Aorta (tissue), 5 donors: ENCODE measurements at regions of chr20 and their contacts with region 1.

Region 1: DNA sequence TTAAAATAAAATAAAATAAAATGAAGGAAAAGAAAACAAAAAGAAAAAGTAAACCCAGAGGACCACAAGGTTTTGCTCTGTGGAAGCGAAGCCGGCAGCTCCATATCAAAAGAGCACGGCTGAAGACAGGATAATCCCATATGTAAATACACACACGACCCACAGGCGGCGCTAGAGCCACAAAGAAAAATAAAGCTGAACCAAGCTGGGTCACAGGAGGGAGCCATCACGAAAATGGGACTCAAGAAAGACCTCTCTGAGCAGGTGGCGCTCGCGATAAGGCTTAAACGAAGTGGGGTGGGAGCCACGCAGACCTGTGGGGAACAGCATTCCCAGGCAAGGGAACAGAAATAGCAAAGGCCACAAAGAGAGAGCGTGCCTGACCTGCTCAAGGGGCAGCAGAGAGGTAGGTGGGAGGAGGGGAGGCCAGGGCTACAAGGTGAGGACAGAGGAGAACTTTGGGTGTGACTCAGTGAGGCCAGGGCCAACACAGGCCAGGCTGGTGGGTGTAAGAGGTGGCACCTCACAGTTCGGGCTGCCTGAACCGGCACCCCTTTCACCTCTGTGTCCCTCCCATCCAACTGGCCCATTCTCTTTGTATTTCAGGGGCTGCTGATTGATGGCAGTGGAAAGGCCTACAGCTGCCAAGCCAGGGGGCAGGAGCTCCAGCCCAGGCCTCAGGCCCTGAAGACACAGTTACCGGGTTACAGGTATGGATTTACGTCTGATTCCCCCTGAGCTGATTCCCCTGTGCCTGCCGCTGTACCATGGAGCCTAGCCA is 26.0 kb downstream of the PTGIS start:
- DNase-seq: peak; percentile 74 to 90
- ATAC-seq: peak; percentile 86
- H3K4me3 ChIP-seq: no peak overlapping the region
- H3K27ac ChIP-seq: peak overlapping the region in 1 of 2 donors; percentile 0
- H3K4me1 ChIP-seq: no peaks in the 10 kb centered on the region
- H3K27me3 ChIP-seq: no peaks in the 10 kb centered on the region

Region 2: DNA sequence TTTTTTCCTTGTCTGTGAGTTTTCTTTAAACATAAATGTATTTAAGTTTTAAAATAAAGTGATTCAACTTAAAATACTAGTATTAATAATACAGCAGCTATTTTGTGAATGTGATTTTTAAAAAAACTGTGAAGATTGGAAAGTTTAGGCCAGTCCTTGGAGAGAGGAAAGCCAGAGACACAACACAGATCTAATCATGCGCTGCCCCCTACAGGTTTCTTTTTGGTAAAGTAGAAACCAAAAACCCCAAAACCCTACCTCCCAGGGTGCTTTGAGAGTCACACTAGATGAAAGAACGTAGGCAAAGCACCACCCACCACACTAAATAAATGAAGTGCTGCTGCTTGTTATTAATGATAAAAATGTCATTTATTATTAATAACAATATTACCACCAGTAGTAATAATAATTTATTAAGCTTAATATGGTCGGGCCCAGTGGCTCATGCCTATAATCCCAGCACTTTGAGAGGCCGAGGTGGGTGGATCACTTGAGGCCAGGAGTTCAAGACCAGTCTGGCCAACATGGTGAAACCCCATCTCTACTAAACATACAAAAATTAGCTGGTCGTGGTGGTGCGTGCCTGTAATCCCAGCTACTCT is 304.4 kb after region 1 on chr20:
- intact Hi-C with region 1: loop called in 1 of 2 experiments (anchors 5 kb)
- DNase-seq: no peak
- ATAC-seq: peak; percentile 70
- H3K4me3 ChIP-seq: no peak overlapping the region
- H3K27ac ChIP-seq: no peak overlapping the region
- H3K4me1 ChIP-seq: peaks cover 5 to 11% of the 10 kb centered on the region in 2 donors
- H3K27me3 ChIP-seq: no peaks in the 10 kb centered on the region

Region 3: DNA sequence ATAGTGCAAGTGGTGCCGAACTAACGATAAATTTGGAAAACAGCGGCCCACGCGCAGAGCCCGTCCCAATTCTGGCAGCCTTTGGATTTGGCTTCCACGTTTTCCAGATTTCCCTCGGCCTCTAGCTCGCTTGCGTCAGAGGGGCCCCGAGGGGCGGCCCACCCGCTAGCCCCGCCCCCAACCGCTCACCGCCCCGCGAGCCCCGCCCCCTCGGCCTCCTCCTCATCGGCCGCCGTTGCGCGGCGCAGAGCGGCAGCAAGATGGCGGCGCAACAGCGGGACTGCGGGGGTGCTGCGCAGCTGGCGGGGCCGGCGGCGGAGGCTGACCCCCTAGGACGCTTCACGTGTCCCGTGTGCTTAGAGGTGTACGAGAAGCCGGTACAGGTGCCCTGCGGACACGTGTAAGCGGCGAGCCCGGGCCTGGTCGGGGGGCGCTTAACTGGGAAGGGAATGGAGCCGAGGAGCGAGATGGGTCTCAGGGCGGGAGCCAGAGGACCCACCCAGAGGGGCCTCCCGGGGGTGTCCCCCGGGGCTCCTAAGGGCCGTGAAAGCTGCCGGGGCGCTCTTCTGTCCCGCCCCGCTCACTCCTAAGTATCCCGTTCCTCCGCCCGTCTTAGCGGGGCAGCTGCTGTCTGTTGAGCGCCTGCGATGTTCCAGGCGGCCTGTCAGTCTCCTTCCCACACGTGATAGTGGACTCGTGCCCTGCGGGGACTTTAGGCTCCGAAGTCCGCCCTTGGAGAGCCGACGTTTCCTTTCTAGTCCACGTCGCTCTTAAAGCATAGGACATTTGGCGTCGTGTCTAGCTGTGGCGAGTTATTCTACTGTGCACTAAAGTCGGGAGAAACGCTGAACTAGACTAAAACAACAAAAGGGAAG is 394.5 kb after region 1 on chr20 and contains the start of gene RNF114:
- intact Hi-C with region 1: loop called in 1 of 2 experiments (anchors 10 kb)
- DNase-seq: peak; percentile 93 to 97
- ATAC-seq: peak; percentile 98
- H3K4me3 ChIP-seq: peak within 1 kb of the TSS; percentile 46 to 96
- H3K27ac ChIP-seq: peak within 1 kb of the TSS in 1 of 2 donors; percentile 53
- H3K4me1 ChIP-seq: no peaks in the 10 kb centered on the region
- H3K27me3 ChIP-seq: no peaks in the 10 kb centered on the region
- total RNA-seq, gene RNF114: 46.8 to 70.6 TPM

Region 4: DNA sequence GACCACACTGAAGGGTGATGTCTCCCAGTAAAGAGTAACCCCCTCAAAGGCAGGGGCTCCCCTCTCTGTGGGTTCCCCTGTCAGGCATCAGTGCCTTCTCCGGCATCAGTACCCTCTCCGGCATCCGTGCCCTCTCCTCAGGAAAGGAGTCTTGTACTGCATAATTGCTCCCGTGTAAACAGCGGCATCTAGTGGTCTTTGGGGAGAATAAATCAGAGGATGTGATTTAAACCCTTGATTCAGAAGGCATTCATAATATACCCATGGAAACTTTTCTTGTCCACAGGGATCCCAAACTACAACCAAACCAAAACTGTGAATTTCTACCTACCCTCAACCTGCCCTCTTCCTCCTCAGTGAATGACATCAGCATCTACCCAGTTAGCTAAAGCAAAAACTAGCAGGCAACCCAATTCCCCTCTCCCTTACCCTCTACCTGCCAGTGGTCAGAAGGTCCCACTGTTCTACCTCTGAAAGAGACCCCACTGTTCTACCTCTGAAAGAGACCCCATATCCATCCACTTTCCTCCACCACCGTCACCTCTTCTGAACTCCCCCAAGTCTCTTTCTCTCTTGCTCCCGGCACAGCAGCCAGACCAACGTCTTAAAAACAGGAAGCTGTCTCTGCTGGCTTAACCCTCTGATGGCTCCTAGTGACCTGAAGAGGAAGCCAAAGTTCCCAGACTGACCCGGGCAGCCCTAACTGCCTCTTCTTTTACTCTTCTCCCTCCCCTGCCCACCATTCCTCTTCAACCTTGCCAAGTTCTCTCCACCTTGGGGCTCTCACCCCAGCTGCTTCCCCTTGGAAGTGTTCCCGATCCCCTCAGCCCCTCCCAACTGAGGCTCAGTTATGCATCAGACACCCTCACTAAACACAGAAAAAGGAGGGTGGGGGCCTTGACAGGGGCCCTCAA is 543.8 kb after region 1 on chr20:
- intact Hi-C with region 1: no loop called
- DNase-seq: peak in 1 of 2 donors; percentile 66
- ATAC-seq: peak; percentile 82
- H3K4me3 ChIP-seq: no peak overlapping the region
- H3K27ac ChIP-seq: no peak overlapping the region
- H3K4me1 ChIP-seq: peaks cover 0 to 5% of the 10 kb centered on the region in 2 donors
- H3K27me3 ChIP-seq: no peaks in the 10 kb centered on the region